SK-N-SH (cell line): ENCODE measurements at regions of chr17 and their contacts with region 1.

Region 1: DNA sequence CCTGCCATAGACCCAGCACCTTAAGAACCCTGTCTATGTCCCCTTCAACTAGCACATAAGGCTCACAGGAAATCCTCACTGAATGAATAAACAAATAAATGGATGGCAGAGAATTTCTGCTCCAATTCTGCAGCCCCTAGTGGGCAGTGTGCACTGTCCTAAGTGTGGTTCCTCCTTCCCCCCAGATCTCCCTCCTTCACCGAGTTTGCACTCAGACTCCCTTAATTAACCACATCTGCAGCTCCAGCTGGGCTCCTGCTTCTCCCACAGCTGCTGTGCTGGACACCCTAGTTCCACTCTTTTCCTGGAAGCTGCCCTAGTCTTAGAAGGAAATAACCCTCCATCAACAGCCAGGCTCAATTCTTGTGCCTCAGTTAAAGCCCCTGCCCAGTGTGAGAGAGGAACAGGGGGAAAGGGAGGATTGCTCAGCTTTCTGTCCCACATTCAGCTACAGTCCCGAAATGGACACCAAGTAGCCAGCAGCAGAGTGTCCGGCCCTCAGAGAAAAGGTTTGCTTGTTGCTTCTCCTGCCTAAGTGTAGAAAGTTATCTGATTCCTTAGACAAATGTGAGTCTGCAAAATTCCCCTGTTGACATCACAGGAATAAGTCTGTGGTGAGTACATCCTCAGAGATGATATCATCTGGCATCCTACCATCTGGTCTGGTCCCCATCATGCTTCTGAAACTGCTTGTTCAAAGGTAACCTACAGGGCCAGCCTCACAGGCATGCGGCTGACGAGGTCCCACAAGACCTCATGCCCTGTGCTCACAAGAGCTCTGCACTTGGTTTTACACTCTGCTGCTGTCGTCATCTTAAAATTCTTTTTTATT is 12.3 kb downstream of the LRRC3C start:
- DNase-seq: peak; percentile 84
- H3K4me3 ChIP-seq: peak overlapping the region in 1 of 2 experiments; percentile 40; a peak in 2 of 4 replicates
- H3K27ac ChIP-seq: peak overlapping the region; percentile 65 to 93
- H3K4me1 ChIP-seq: peaks cover 9 to 14% of the 10 kb centered on the region in 2 experiments; a peak in 2 of 4 replicates
- H3K27me3 ChIP-seq: no peaks in the 10 kb centered on the region
- CTCF ChIP-seq: peak; percentile 68
- EP300 ChIP-seq: 0 out of 4 replicates have a peak, but pooled peaks of 1 of the 2 experiments have one; percentile 46
- RAD21 ChIP-seq: peak; percentile 65

Region 2: DNA sequence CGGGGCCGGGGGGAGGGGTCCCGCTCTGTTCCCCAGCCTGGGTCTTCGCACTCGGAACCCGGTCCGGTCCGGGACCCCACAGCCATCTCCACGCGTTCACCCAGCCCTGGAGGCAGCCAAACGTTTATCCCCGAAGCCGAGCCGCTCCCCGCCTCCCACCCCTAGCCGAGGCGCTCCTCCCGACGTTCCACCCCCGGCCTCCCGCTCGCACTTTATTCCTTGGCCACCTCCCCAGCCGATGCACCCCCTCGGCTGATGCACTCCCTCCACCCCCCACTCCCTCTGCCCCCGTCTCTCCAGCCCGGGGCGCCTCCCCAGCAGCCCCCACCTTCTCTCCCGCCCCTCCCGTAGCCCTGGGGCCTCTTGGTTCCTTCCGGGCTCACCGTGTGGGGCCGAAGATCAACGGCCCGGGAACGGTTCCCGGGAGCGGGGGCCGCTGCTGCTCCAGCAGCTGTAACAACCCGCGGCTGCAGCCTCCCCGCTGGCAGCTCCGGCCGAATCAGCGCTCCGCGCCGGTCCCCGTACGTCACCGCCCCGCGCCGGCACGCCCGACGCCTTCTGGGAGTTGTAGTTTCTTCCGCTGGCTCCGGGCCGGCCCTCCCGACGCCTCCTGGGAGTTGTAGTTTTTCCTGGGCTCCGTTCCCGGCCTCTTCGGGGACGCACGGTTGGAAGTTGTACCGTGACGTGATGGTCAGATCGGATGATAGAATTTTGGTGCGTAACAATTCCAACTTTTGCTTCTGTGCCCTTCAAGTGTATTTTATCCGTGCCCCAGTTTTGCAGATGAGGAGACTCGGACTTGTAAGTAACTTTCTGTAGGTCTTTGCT is 12.5 kb before region 1 on chr17 and contains the starts of genes LRRC3C and ORMDL3:
- CTCF ChIA-PET with region 1: interaction called, 20 read pairs
- POLR2A ChIA-PET with region 1: interaction called, 3 read pairs
- DNase-seq: peak; percentile 96
- H3K4me3 ChIP-seq: peak within 1 kb of the TSS; percentile 60 to 92
- H3K27ac ChIP-seq: peak within 1 kb of the TSS; percentile 73 to 90; a peak in 3 of 4 replicates
- H3K4me1 ChIP-seq: peaks cover 8 to 32% of the 10 kb centered on the region in 2 experiments; a peak in 3 of 4 replicates
- H3K27me3 ChIP-seq: no peaks in the 10 kb centered on the region
- CTCF ChIP-seq: no peak
- EP300 ChIP-seq: no peak
- RAD21 ChIP-seq: no peak
- polyA plus RNA-seq, gene LRRC3C: not detected in 2 replicates
- polyA plus RNA-seq, gene ORMDL3: 27.8 and 38.5 TPM in 2 replicates

Region 3: GRCh38 chr17:39952680-39953470 is 13.1 kb after region 1 on chr17:
- CTCF ChIA-PET with region 1: interaction called, 16 read pairs
- POLR2A ChIA-PET with region 1: interaction called, 3 read pairs
- DNase-seq: peak; percentile 98
- H3K4me3 ChIP-seq: peak overlapping the region; percentile 41 to 50
- H3K27ac ChIP-seq: peak overlapping the region in 1 of 2 experiments; percentile 70; a peak in 1 of 4 replicates
- H3K4me1 ChIP-seq: peaks cover 0 to 11% of the 10 kb centered on the region in 2 experiments; a peak in 1 of 4 replicates
- H3K27me3 ChIP-seq: no peaks in the 10 kb centered on the region
- CTCF ChIP-seq: no peak
- EP300 ChIP-seq: no peak
- RAD21 ChIP-seq: no peak